Transverse colon (tissue), 4 donors: ENCODE measurements at regions of chr17 and their contacts with region 1.

Region 1: GRCh38 chr17:27747462-27748359 is 52.6 kb downstream of the NOS2 start:
- DNase-seq: no peak
- H3K4me3 ChIP-seq: no peak overlapping the region
- H3K27ac ChIP-seq: no peak overlapping the region
- H3K4me1 ChIP-seq: no peaks in the 10 kb centered on the region
- H3K27me3 ChIP-seq: no peaks in the 10 kb centered on the region
- CTCF ChIP-seq: peak in 3 of 5 experiments; percentile 12 to 33 (median 15)
- EP300 ChIP-seq: no peak
- POLR2A ChIP-seq: no peak

Region 2: GRCh38 chr17:27660426-27660825 is 87.3 kb before region 1 on chr17:
- in situ Hi-C with region 1: loop called in 3 of 4 experiments (anchors 5 to 10 kb)
- intact Hi-C with region 1: no loop called
- DNase-seq: no peak
- H3K4me3 ChIP-seq: no peak overlapping the region
- H3K27ac ChIP-seq: no peak overlapping the region
- H3K4me1 ChIP-seq: no peaks in the 10 kb centered on the region
- H3K27me3 ChIP-seq: no peaks in the 10 kb centered on the region
- CTCF ChIP-seq: no peak
- EP300 ChIP-seq: no peak
- POLR2A ChIP-seq: no peak

Region 3: GRCh38 chr17:27666831-27667560 is 80.7 kb before region 1 on chr17:
- in situ Hi-C with region 1: loop called in 3 of 4 experiments (anchors 5 to 10 kb)
- intact Hi-C with region 1: no loop called
- DNase-seq: no peak
- H3K4me3 ChIP-seq: no peak overlapping the region
- H3K27ac ChIP-seq: no peak overlapping the region
- H3K4me1 ChIP-seq: no peaks in the 10 kb centered on the region
- H3K27me3 ChIP-seq: no peaks in the 10 kb centered on the region
- CTCF ChIP-seq: no peak
- EP300 ChIP-seq: no peak
- POLR2A ChIP-seq: no peak